ENCODE measurements at regions of chr6 and their contacts with region 1.

Region 1: GRCh38 chr6:446418-447366 is 55.1 kb downstream of the IRF4 start:
- DNase-seq: peak; percentile 92
- H3K4me3 Mint-ChIP-seq: peak overlapping the region; percentile 64
- H3K27ac Mint-ChIP-seq: peak overlapping the region; percentile 87
- H3K4me1 Mint-ChIP-seq: peaks cover 55% of the 10 kb centered on the region
- H3K27me3 Mint-ChIP-seq: peaks cover 12% of the 10 kb centered on the region

Region 2: GRCh38 chr6:399785-400534 is 46.7 kb before region 1 on chr6:
- CTCF ChIA-PET with region 1: interaction called, 3 read pairs
- POLR2A ChIA-PET with region 1: interaction called, 110 read pairs
- DNase-seq: peak; percentile 67
- H3K4me3 Mint-ChIP-seq: peak overlapping the region; percentile 53
- H3K27ac Mint-ChIP-seq: peak overlapping the region; percentile 82
- H3K4me1 Mint-ChIP-seq: peaks cover 95% of the 10 kb centered on the region
- H3K27me3 Mint-ChIP-seq: no peaks in the 10 kb centered on the region

Region 3: GRCh38 chr6:436308-437036 is 10.2 kb before region 1 on chr6:
- CTCF ChIA-PET with region 1: interaction called, 12 read pairs
- POLR2A ChIA-PET with region 1: interaction called, 56 read pairs
- DNase-seq: peak; percentile 15
- H3K4me3 Mint-ChIP-seq: no peak overlapping the region
- H3K27ac Mint-ChIP-seq: no peak overlapping the region
- H3K4me1 Mint-ChIP-seq: peaks cover 44% of the 10 kb centered on the region
- H3K27me3 Mint-ChIP-seq: peaks cover 15% of the 10 kb centered on the region

Region 4: GRCh38 chr6:474453-475185 is 27.9 kb after region 1 on chr6:
- CTCF ChIA-PET with region 1: no interaction called
- POLR2A ChIA-PET with region 1: interaction called, 26 read pairs
- DNase-seq: peak; percentile 87
- H3K4me3 Mint-ChIP-seq: peak overlapping the region; percentile 46
- H3K27ac Mint-ChIP-seq: peak overlapping the region; percentile 42
- H3K4me1 Mint-ChIP-seq: peaks cover 60% of the 10 kb centered on the region
- H3K27me3 Mint-ChIP-seq: peaks cover 43% of the 10 kb centered on the region

Region 5: GRCh38 chr6:490251-491037 is 43.8 kb after region 1 on chr6:
- CTCF ChIA-PET with region 1: interaction called, 4 read pairs
- POLR2A ChIA-PET with region 1: interaction called, 21 read pairs
- DNase-seq: peak; percentile 42
- H3K4me3 Mint-ChIP-seq: peak overlapping the region; percentile 45
- H3K27ac Mint-ChIP-seq: peak overlapping the region; percentile 93
- H3K4me1 Mint-ChIP-seq: peaks cover 79% of the 10 kb centered on the region
- H3K27me3 Mint-ChIP-seq: no peaks in the 10 kb centered on the region

Measured in activated CD4-positive, alpha-beta memory T cell treated with anti-CD3 and anti-CD28 coated beads, Interleukin-2, amount 10 ng/mL, durations not matched to agents 7 days and 5 days (primary cell).